Gastrocnemius medialis (tissue), 4 donors: ENCODE measurements at regions of chr1 and their contacts with region 1.

Region 1: GRCh38 chr1:31182352-31182751 is 57.3 kb downstream of the NKAIN1 start:
- DNase-seq: peak; percentile 80 to 83
- ATAC-seq: peak; percentile 88 to 92
- H3K4me3 ChIP-seq: peak overlapping the region; percentile 12 to 46 (median 38)
- H3K27ac ChIP-seq: peak overlapping the region in 3 of 4 donors; percentile 39 to 49 (median 48)
- H3K4me1 ChIP-seq: peaks cover 8 to 16% of the 10 kb centered on the region in 2 donors
- H3K27me3 ChIP-seq: no peaks in the 10 kb centered on the region
- CTCF ChIP-seq: peak; percentile 8 to 59 (median 54)
- POLR2A ChIP-seq: no peak

Region 2: DNA sequence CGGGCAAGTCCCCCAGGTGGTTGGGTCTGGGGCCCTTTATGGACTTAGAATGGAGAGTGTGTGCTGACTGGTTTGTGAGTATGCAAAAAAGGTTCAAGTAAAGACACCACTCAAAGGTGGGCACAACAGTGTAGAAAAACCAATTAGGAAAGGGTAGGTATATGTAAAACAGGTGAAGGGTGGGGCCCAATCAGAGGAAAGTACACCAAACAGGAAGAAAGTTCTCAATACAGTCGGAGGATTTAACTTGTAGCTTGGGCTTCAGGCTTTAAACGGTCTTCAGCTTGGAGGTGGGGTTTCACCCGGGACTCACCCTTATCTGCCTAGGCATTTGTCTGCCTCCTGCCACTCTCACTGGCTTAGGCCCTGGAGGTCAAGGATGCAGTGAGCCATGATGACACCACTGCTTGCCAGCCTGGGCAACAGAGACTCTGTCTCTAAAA is 110.0 kb before region 1 on chr1:
- in situ Hi-C with region 1: no loop called
- intact Hi-C with region 1: no loop called
- DNase-seq: no peak
- ATAC-seq: no peak
- H3K4me3 ChIP-seq: no peak overlapping the region
- H3K27ac ChIP-seq: no peak overlapping the region
- H3K4me1 ChIP-seq: peaks cover 0 to 5% of the 10 kb centered on the region in 2 donors
- H3K27me3 ChIP-seq: no peaks in the 10 kb centered on the region
- CTCF ChIP-seq: no peak
- POLR2A ChIP-seq: no peak

Region 3: GRCh38 chr1:31163866-31164265 is 18.5 kb before region 1 on chr1:
- in situ Hi-C with region 1: no loop called
- intact Hi-C with region 1: loop called (anchors 2 kb)
- DNase-seq: no peak
- ATAC-seq: no peak
- H3K4me3 ChIP-seq: no peak overlapping the region
- H3K27ac ChIP-seq: no peak overlapping the region
- H3K4me1 ChIP-seq: peaks cover 4 to 5% of the 10 kb centered on the region in 2 donors
- H3K27me3 ChIP-seq: no peaks in the 10 kb centered on the region
- CTCF ChIP-seq: no peak
- POLR2A ChIP-seq: no peak

Region 4: DNA sequence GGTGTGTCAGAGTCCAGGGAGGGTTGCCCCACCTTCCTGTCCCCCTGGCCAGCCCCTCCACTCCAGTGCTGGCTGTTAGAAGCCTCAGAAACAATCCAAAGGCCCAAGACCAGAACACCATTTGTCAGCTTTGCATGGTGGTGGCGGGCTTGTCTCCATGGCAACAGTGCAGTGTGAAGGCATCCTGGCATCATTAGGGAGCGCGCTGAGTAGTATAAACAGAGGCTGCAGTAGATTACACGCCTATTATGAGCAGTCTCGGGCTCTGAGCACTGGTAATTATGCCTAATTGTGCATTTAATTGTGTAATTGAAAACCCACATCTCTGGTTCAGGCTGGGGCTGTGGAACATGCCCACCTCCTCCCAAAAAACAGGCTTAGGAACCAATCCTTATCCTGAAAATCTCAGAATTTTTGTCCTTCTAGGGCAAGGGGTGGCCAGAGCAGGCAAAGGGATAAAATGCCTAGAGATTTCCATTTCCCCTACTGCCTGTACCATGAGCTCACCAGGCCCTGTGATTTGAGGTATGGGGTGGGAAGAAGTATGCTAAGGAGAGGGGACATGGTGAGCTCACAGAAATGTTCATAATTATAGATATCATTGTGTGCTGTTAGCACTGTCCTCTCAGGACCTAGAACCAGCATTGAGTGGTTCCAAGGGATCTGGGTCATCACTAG is 45.7 kb after region 1 on chr1:
- in situ Hi-C with region 1: no loop called
- intact Hi-C with region 1: no loop called
- DNase-seq: no peak
- ATAC-seq: no peak
- H3K4me3 ChIP-seq: no peak overlapping the region
- H3K27ac ChIP-seq: no peak overlapping the region
- H3K4me1 ChIP-seq: no peaks in the 10 kb centered on the region
- H3K27me3 ChIP-seq: no peaks in the 10 kb centered on the region
- CTCF ChIP-seq: no peak
- POLR2A ChIP-seq: no peak

Region 5: GRCh38 chr1:31259746-31260145 is 77.4 kb after region 1 on chr1:
- in situ Hi-C with region 1: no loop called
- intact Hi-C with region 1: loop called (anchors 5 kb)
- DNase-seq: peak; percentile 37 to 41
- ATAC-seq: peak in 1 of 2 donors; percentile 43
- H3K4me3 ChIP-seq: no peak overlapping the region
- H3K27ac ChIP-seq: peak overlapping the region in 3 of 4 donors; percentile 14 to 79 (median 44)
- H3K4me1 ChIP-seq: peaks cover 27 to 53% of the 10 kb centered on the region in 2 donors
- H3K27me3 ChIP-seq: no peaks in the 10 kb centered on the region
- CTCF ChIP-seq: no peak
- POLR2A ChIP-seq: no peak

Region 6: DNA sequence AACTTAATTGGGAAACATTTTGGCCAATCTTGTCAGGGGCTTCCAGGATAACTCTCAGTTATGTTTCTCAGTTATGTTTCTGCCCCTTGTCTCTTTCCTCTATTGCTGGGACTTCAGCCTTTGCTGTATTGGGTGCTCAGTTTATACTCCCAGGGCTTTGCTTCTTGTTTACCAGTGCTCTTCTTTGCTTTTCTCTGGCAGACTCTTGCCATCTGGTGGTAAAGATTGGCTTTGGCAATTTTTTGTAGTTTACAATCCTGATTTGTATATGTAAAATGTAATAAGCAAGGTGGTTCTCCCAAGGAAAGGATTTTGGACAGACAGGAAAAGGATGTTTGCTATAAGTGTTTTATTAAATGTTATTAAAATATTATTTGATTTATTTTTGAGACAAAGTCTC is 152.7 kb after region 1 on chr1:
- in situ Hi-C with region 1: loop called in 2 of 4 experiments (anchors 10 kb)
- intact Hi-C with region 1: loop called (anchors 2 kb)
- DNase-seq: no peak
- ATAC-seq: peak; percentile 54 to 68
- H3K4me3 ChIP-seq: no peak overlapping the region
- H3K27ac ChIP-seq: no peak overlapping the region
- H3K4me1 ChIP-seq: no peaks in the 10 kb centered on the region
- H3K27me3 ChIP-seq: no peaks in the 10 kb centered on the region
- CTCF ChIP-seq: peak; percentile 42 to 65 (median 48)
- POLR2A ChIP-seq: no peak

Region 7: GRCh38 chr1:31548907-31549808 is 366.8 kb after region 1 on chr1:
- in situ Hi-C with region 1: loop called (anchors 10 to 25 kb)
- intact Hi-C with region 1: loop called (anchors 2 kb)
- DNase-seq: peak; percentile 60 to 82
- ATAC-seq: peak; percentile 83 to 86
- H3K4me3 ChIP-seq: peak overlapping the region in 3 of 4 donors; percentile 8 to 31 (median 23)
- H3K27ac ChIP-seq: peak overlapping the region; percentile 65 to 79 (median 74)
- H3K4me1 ChIP-seq: peaks cover 14 to 16% of the 10 kb centered on the region in 2 donors
- H3K27me3 ChIP-seq: no peaks in the 10 kb centered on the region
- CTCF ChIP-seq: peak; percentile 87 to 96 (median 93)
- POLR2A ChIP-seq: no peak